ENCODE measurements at regions of chr16 and their contacts with region 1.

Region 1: DNA sequence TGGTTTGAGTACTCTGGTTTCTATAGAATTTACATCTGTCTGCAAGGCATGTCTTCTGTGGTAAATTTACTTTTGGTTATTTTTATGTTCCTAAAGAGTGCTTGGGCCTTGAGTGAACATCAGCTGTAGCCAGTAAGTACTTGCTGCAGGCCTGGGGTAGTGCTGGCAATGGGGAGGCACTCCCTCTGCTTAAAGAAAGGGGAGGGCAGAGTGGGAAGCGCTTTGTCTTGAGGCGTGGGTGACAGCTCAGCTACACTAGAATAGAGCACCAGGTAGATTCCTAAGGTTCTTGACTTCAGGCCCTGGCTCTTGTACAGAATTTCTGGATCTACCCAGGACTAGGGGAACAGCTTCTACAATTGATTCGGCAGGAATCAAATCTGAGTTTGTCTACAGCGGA is 50.6 kb downstream of the MPHOSPH6 start:
- DNase-seq: no peak
- ATAC-seq: no peak
- H3K4me3 ChIP-seq: no peak overlapping the region
- H3K27ac ChIP-seq: no peak overlapping the region
- H3K4me1 ChIP-seq: no peaks in the 10 kb centered on the region
- H3K27me3 ChIP-seq: no peaks in the 10 kb centered on the region
- CTCF ChIP-seq: no peak

Region 2: GRCh38 chr16:82136956-82137821 is 17.8 kb after region 1 on chr16:
- CTCF ChIA-PET with region 1: no interaction called
- POLR2A ChIA-PET with region 1: no interaction called
- in situ Hi-C with region 1: no loop called
- intact Hi-C with region 1: no loop called
- DNase-seq: no peak
- ATAC-seq: no peak
- H3K4me3 ChIP-seq: no peak overlapping the region
- H3K27ac ChIP-seq: peak overlapping the region; percentile 84
- H3K4me1 ChIP-seq: peaks cover 12% of the 10 kb centered on the region
- H3K27me3 ChIP-seq: no peaks in the 10 kb centered on the region
- CTCF ChIP-seq: no peak

Region 3: DNA sequence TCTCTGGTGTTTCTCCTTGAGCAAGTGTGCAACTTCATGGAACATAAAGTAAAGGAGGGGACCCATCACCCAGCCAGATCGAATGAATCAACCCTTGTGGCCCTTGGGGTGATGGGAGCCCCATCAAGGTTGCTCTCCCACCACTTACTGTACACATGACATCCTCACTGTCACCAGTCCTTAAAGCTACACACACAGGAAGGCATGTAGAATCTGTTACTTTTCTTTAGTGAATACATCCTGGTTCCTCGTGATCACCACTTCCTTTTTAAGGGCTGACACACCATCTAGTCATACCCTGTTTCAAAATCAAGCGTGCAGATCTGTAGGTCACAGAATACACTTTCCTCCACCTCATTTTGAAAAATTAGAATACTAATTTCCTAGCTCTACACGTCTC is 73.3 kb after region 1 on chr16:
- CTCF ChIA-PET with region 1: no interaction called
- POLR2A ChIA-PET with region 1: no interaction called
- in situ Hi-C with region 1: no loop called
- intact Hi-C with region 1: no loop called
- DNase-seq: no peak
- ATAC-seq: no peak
- H3K4me3 ChIP-seq: no peak overlapping the region
- H3K27ac ChIP-seq: no peak overlapping the region
- H3K4me1 ChIP-seq: no peaks in the 10 kb centered on the region
- H3K27me3 ChIP-seq: no peaks in the 10 kb centered on the region
- CTCF ChIP-seq: no peak

Region 4: GRCh38 chr16:82414476-82414875 is 295.1 kb after region 1 on chr16:
- CTCF ChIA-PET with region 1: no interaction called
- POLR2A ChIA-PET with region 1: no interaction called
- in situ Hi-C with region 1: no loop called
- intact Hi-C with region 1: no loop called
- DNase-seq: no peak
- ATAC-seq: no peak
- H3K4me3 ChIP-seq: no peak overlapping the region
- H3K27ac ChIP-seq: no peak overlapping the region
- H3K4me1 ChIP-seq: no peaks in the 10 kb centered on the region
- H3K27me3 ChIP-seq: no peaks in the 10 kb centered on the region
- CTCF ChIP-seq: no peak

Region 5: GRCh38 chr16:82425661-82426060 is 306.3 kb after region 1 on chr16:
- CTCF ChIA-PET with region 1: no interaction called
- POLR2A ChIA-PET with region 1: interaction called, 14 read pairs
- in situ Hi-C with region 1: no loop called
- intact Hi-C with region 1: no loop called
- DNase-seq: no peak
- ATAC-seq: no peak
- H3K4me3 ChIP-seq: no peak overlapping the region
- H3K27ac ChIP-seq: no peak overlapping the region
- H3K4me1 ChIP-seq: no peaks in the 10 kb centered on the region
- H3K27me3 ChIP-seq: no peaks in the 10 kb centered on the region
- CTCF ChIP-seq: no peak

Region 6: GRCh38 chr16:83187405-83187804 is 1068.0 kb after region 1 on chr16:
- CTCF ChIA-PET with region 1: no interaction called
- POLR2A ChIA-PET with region 1: no interaction called
- in situ Hi-C with region 1: no loop called
- intact Hi-C with region 1: no loop called
- DNase-seq: no peak
- ATAC-seq: no peak
- H3K4me3 ChIP-seq: no peak overlapping the region
- H3K27ac ChIP-seq: no peak overlapping the region
- H3K4me1 ChIP-seq: no peaks in the 10 kb centered on the region
- H3K27me3 ChIP-seq: no peaks in the 10 kb centered on the region
- CTCF ChIP-seq: no peak